ENCODE measurements at regions of chr2 and their contacts with region 1.

Region 1: GRCh38 chr2:73926493-73927338 is at the start of gene DGUOK:
- DNase-seq: peak; percentile 99
- ATAC-seq: peak; percentile 99
- H3K4me3 Mint-ChIP-seq: peak within 1 kb of the TSS; percentile 87
- H3K27ac Mint-ChIP-seq: peak within 1 kb of the TSS; percentile 96
- H3K4me1 Mint-ChIP-seq: peaks cover 49% of the 10 kb centered on the region
- H3K27me3 Mint-ChIP-seq: no peaks in the 10 kb centered on the region
- total RNA-seq, gene DGUOK: 97.6 to 119 TPM

Region 2: GRCh38 chr2:73851274-73851673 is 75.4 kb before region 1 on chr2:
- CTCF ChIA-PET with region 1: no interaction called
- POLR2A ChIA-PET with region 1: no interaction called
- intact Hi-C with region 1: loop called in 1 of 2 experiments (anchors 2 kb)
- DNase-seq: no peak
- ATAC-seq: peak; percentile 40
- H3K4me3 Mint-ChIP-seq: no peak overlapping the region
- H3K27ac Mint-ChIP-seq: peak overlapping the region; percentile 72
- H3K4me1 Mint-ChIP-seq: peaks cover 7% of the 10 kb centered on the region
- H3K27me3 Mint-ChIP-seq: no peaks in the 10 kb centered on the region

Region 3: GRCh38 chr2:73963385-73964120 is 36.8 kb after region 1 on chr2:
- CTCF ChIA-PET with region 1: no interaction called
- POLR2A ChIA-PET with region 1: interaction called, 6 read pairs
- intact Hi-C with region 1: loop called in 1 of 2 experiments (anchors 1 kb)
- DNase-seq: peak; percentile 72
- ATAC-seq: peak; percentile 95
- H3K4me3 Mint-ChIP-seq: peak overlapping the region; percentile 37
- H3K27ac Mint-ChIP-seq: peak overlapping the region; percentile 90
- H3K4me1 Mint-ChIP-seq: peaks cover 41% of the 10 kb centered on the region
- H3K27me3 Mint-ChIP-seq: no peaks in the 10 kb centered on the region

Region 4: DNA sequence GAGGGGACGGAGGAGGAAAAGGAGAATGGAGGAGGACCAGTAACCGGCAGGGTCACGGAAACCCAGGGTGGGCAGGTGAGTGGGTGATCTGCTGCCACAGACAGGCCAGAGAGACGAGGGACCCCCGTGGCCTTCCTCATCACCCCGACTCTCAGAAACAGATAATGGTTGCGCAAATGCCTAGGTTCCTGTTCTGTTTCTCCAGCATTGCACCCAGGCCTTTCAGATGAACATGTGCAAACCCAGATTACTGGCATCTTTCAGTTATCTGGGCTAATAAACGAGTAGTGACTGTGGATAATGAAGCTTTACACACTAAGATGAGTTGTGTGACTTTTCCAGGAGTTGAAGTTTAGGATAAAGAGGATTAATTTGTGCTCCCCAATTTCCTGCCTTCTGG is 104.5 kb after region 1 on chr2:
- CTCF ChIA-PET with region 1: no interaction called
- POLR2A ChIA-PET with region 1: no interaction called
- intact Hi-C with region 1: loop called in 1 of 2 experiments (anchors 5 kb)
- DNase-seq: no peak
- ATAC-seq: no peak
- H3K4me3 Mint-ChIP-seq: peak overlapping the region; percentile 67
- H3K27ac Mint-ChIP-seq: peak overlapping the region; percentile 85
- H3K4me1 Mint-ChIP-seq: peaks cover 73% of the 10 kb centered on the region
- H3K27me3 Mint-ChIP-seq: no peaks in the 10 kb centered on the region

Region 5: GRCh38 chr2:74178201-74179062 is 251.7 kb after region 1 on chr2 and contains the start of gene MOB1A:
- CTCF ChIA-PET with region 1: no interaction called
- POLR2A ChIA-PET with region 1: no interaction called
- intact Hi-C with region 1: loop called in 1 of 2 experiments (anchors 1 kb)
- DNase-seq: peak; percentile 99
- ATAC-seq: peak; percentile 95
- H3K4me3 Mint-ChIP-seq: peak within 1 kb of the TSS; percentile 82
- H3K27ac Mint-ChIP-seq: peak within 1 kb of the TSS; percentile 87
- H3K4me1 Mint-ChIP-seq: peaks cover 42% of the 10 kb centered on the region
- H3K27me3 Mint-ChIP-seq: no peaks in the 10 kb centered on the region
- total RNA-seq, gene MOB1A: 96.6 to 149 TPM

Measured in activated CD4-positive, alpha-beta T cell treated with anti-CD3 and anti-CD28 coated beads for 36 hours (primary cell).